ENCODE measurements at regions of chr3 and their contacts with region 1.

Region 1: GRCh38 chr3:146589899-146590508 is 15.1 kb downstream of the PLSCR5 start:
- DNase-seq: no peak
- H3K4me3 ChIP-seq: no peak overlapping the region
- H3K27ac ChIP-seq: no peak overlapping the region
- H3K4me1 ChIP-seq: no peaks in the 10 kb centered on the region
- H3K27me3 ChIP-seq: no peaks in the 10 kb centered on the region
- CTCF ChIP-seq: peak in 2 of 3 experiments; percentile 55 to 59
- EP300 ChIP-seq: no peak
- POLR2A ChIP-seq: no peak

Region 2: GRCh38 chr3:146476094-146476740 is 113.8 kb before region 1 on chr3:
- intact Hi-C with region 1: no loop called
- DNase-seq: no peak
- H3K4me3 ChIP-seq: no peak overlapping the region
- H3K27ac ChIP-seq: no peak overlapping the region
- H3K4me1 ChIP-seq: no peaks in the 10 kb centered on the region
- H3K27me3 ChIP-seq: no peaks in the 10 kb centered on the region
- CTCF ChIP-seq: no peak
- EP300 ChIP-seq: no peak
- POLR2A ChIP-seq: no peak

Region 3: DNA sequence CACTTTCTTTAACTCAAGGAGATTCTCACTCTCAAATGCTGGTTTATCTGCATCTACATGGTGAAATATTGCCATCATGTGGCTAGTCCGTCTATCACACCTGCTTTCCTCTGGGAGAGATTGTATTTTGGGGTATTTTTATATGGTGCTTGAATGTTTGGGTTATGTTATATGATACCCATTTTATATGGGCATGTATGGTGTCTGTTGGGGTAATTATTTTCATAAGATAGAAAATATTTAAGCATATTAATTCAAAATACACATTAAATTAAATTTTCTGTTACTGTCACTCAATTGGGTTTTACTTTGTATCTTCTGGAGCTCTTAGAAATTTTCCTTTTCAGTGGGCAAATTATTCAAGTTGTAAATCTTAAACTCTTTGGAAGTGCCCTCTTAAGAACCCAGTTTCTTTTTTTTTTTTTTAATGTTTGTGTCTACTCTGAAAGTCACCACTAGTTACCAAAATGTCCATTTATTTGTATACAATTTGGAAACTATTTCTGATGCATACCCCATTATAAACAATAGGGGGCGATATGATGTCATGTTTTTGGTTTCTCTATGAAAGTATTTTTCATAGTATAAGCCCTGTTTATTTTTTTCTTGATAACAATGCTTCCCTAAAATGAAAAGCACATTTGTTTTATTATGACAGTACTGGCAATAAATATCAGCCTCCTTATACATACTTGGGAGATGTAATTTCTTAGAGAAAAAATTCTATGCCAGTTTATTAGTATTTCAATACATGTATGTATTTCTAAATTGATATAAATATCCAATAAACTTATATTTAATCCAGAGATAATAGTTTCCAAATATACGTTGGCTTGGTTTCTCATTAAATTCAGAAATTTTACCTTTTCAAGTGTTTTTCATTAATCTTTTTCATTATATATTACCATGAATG is 51.2 kb after region 1 on chr3:
- intact Hi-C with region 1: loop called (anchors 5 kb)
- DNase-seq: no peak
- H3K4me3 ChIP-seq: no peak overlapping the region
- H3K27ac ChIP-seq: no peak overlapping the region
- H3K4me1 ChIP-seq: no peaks in the 10 kb centered on the region
- H3K27me3 ChIP-seq: no peaks in the 10 kb centered on the region
- CTCF ChIP-seq: peak; percentile 21 to 39 (median 33)
- EP300 ChIP-seq: no peak
- POLR2A ChIP-seq: no peak

Region 4: DNA sequence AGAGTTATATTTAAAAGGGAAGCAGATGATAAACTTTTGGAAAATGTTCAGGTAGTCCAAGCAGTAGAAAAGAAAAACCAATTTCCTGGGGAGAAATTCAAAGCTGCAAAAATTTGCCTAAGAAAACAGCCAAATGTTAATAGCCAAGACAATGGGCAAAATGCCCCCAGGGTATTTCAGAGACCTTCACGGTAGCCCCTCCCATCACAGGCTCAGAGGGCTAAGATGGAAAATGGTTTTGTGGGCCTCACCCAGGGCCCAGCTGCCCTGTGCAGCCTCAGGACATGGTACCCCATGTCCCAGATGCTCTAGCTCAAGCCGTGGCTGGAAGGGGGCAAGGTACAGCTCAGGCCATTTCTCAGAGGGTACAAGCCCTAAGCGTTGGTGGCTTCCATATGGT is 425.3 kb after region 1 on chr3:
- intact Hi-C with region 1: no loop called
- DNase-seq: no peak
- H3K4me3 ChIP-seq: no peak overlapping the region
- H3K27ac ChIP-seq: no peak overlapping the region
- H3K4me1 ChIP-seq: no peaks in the 10 kb centered on the region
- H3K27me3 ChIP-seq: no peaks in the 10 kb centered on the region
- CTCF ChIP-seq: no peak
- EP300 ChIP-seq: no peak
- POLR2A ChIP-seq: no peak

Measured in esophagus muscularis mucosa (tissue), 4 donors.